ENCODE measurements at regions of chr17 and their contacts with region 1.

Region 1: DNA sequence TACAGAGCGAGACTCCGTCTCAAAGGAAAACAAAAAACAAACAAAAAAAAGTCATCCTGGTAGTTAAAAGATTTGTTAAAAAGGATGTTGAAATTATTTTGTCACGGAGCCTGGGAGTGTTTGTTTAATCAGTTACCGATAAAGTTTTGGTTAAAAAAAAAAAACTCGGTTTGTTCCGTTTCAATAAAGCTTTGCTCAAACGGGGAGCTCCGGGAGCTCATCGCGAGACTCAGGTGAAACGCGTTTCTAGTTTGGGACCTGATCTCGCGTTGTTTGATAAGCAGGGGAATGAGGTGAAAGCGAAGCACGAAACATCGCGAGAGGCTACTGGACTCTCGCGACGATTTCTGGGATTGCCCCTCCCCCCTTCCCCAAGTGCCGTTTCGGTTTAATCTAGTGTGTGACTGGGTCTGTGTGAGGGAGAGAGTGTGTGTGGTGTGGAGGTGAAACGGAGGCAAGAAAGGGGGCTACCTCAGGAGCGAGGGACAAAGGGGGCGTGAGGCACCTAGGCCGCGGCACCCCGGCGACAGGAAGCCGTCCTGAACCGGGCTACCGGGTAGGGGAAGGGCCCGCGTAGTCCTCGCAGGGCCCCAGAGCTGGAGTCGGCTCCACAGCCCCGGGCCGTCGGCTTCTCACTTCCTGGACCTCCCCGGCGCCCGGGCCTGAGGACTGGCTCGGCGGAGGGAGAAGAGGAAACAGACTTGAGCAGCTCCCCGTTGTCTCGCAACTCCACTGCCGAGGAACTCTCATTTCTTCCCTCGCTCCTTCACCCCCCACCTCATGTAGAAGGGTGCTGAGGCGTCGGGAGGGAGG is at the start of gene CDK12:
- DNase-seq: peak; percentile 92 to 100
- ATAC-seq: peak; percentile 86 to 94 (median 88)
- H3K4me3 ChIP-seq: peak within 1 kb of the TSS; percentile 99
- H3K4me3 Mint-ChIP-seq: peak within 1 kb of the TSS; percentile 92
- H3K27ac ChIP-seq: peak within 1 kb of the TSS; percentile 97
- H3K27ac Mint-ChIP-seq: peak within 1 kb of the TSS; percentile 93 to 99
- H3K4me1 ChIP-seq: peaks cover 33% of the 10 kb centered on the region
- H3K4me1 Mint-ChIP-seq: peaks cover 44 to 53% of the 10 kb centered on the region in 2 donors
- H3K27me3 ChIP-seq: no peaks in the 10 kb centered on the region
- H3K27me3 Mint-ChIP-seq: no peaks in the 10 kb centered on the region
- CTCF ChIP-seq: no peak
- total RNA-seq, gene CDK12: 119 to 129 (median 124) TPM

Region 2: GRCh38 chr17:39231591-39232551 is 229.4 kb before region 1 on chr17:
- intact Hi-C with region 1: no loop called
- DNase-seq: peak; percentile 61 to 80
- ATAC-seq: peak; percentile 85 to 93 (median 90)
- H3K4me3 ChIP-seq: no peak overlapping the region
- H3K4me3 Mint-ChIP-seq: peak overlapping the region; percentile 31
- H3K27ac ChIP-seq: no peak overlapping the region
- H3K27ac Mint-ChIP-seq: peak overlapping the region in 1 of 2 donors; percentile 42
- H3K4me1 ChIP-seq: peaks cover 10% of the 10 kb centered on the region
- H3K4me1 Mint-ChIP-seq: peaks cover 10 to 19% of the 10 kb centered on the region in 2 donors
- H3K27me3 ChIP-seq: peaks cover 12% of the 10 kb centered on the region
- H3K27me3 Mint-ChIP-seq: peaks cover 21% of the 10 kb centered on the region in 2 donors
- CTCF ChIP-seq: peak; percentile 69

Region 3: GRCh38 chr17:39401412-39402243 is 59.7 kb before region 1 on chr17 and contains the start of gene FBXL20:
- intact Hi-C with region 1: loop called (anchors 5 kb)
- DNase-seq: peak; percentile 86 to 95
- ATAC-seq: peak; percentile 80 to 90 (median 81)
- H3K4me3 ChIP-seq: peak within 1 kb of the TSS; percentile 83
- H3K4me3 Mint-ChIP-seq: peak within 1 kb of the TSS; percentile 98
- H3K27ac ChIP-seq: peak within 1 kb of the TSS; percentile 61
- H3K27ac Mint-ChIP-seq: peak within 1 kb of the TSS; percentile 87 to 96
- H3K4me1 ChIP-seq: peaks cover 13% of the 10 kb centered on the region
- H3K4me1 Mint-ChIP-seq: peaks cover 18 to 24% of the 10 kb centered on the region in 2 donors
- H3K27me3 ChIP-seq: no peaks in the 10 kb centered on the region
- H3K27me3 Mint-ChIP-seq: no peaks in the 10 kb centered on the region
- CTCF ChIP-seq: no peak
- total RNA-seq, gene FBXL20: 25.5 to 34.2 (median 32.4) TPM

Region 4: GRCh38 chr17:39450847-39451581 is 10.3 kb before region 1 on chr17 and contains the start of gene MED1:
- intact Hi-C with region 1: loop called (anchors 1 kb)
- DNase-seq: peak; percentile 87 to 98
- ATAC-seq: peak; percentile 95 to 97 (median 96)
- H3K4me3 ChIP-seq: peak within 1 kb of the TSS; percentile 91
- H3K4me3 Mint-ChIP-seq: peak within 1 kb of the TSS; percentile 94
- H3K27ac ChIP-seq: peak within 1 kb of the TSS; percentile 85
- H3K27ac Mint-ChIP-seq: peak within 1 kb of the TSS; percentile 92 to 97
- H3K4me1 ChIP-seq: peaks cover 18% of the 10 kb centered on the region
- H3K4me1 Mint-ChIP-seq: peaks cover 17 to 21% of the 10 kb centered on the region in 2 donors
- H3K27me3 ChIP-seq: no peaks in the 10 kb centered on the region
- H3K27me3 Mint-ChIP-seq: no peaks in the 10 kb centered on the region
- CTCF ChIP-seq: no peak
- total RNA-seq, gene MED1: 44.3 to 63.8 (median 53.4) TPM

Region 5: GRCh38 chr17:39533899-39534298 is 72.6 kb after region 1 on chr17:
- intact Hi-C with region 1: no loop called
- DNase-seq: no peak
- ATAC-seq: no peak
- H3K4me3 ChIP-seq: no peak overlapping the region
- H3K4me3 Mint-ChIP-seq: no peak overlapping the region
- H3K27ac ChIP-seq: no peak overlapping the region
- H3K27ac Mint-ChIP-seq: no peak overlapping the region
- H3K4me1 ChIP-seq: peaks cover 2% of the 10 kb centered on the region
- H3K4me1 Mint-ChIP-seq: peaks cover 14 to 20% of the 10 kb centered on the region in 2 donors
- H3K27me3 ChIP-seq: no peaks in the 10 kb centered on the region
- H3K27me3 Mint-ChIP-seq: no peaks in the 10 kb centered on the region
- CTCF ChIP-seq: no peak